ENCODE measurements at regions of chr3 and their contacts with region 1.

Region 1: GRCh38 chr3:186540221-186540834 is 3.9 kb downstream of the CRYGS start:
- DNase-seq: peak; percentile 75
- ATAC-seq: peak; percentile 80
- H3K4me3 ChIP-seq: no peak overlapping the region
- H3K27ac ChIP-seq: no peak overlapping the region
- H3K4me1 ChIP-seq: no peaks in the 10 kb centered on the region
- H3K27me3 ChIP-seq: no peaks in the 10 kb centered on the region
- CTCF ChIP-seq: peak; percentile 78
- POLR2A ChIP-seq: 0 out of 2 replicates have a peak, but pooled peaks have one; percentile 33
- RAD21 ChIP-seq: peak; percentile 85

Region 2: GRCh38 chr3:186108941-186109865 is 431.1 kb before region 1 on chr3 and contains the start of gene ETV5:
- CTCF ChIA-PET with region 1: no interaction called
- POLR2A ChIA-PET with region 1: no interaction called
- dilution Hi-C with region 1: no loop called
- in situ Hi-C with region 1: no loop called
- intact Hi-C with region 1: loop called (anchors 5 kb)
- DNase-seq: peak; percentile 99
- ATAC-seq: peak; percentile 90
- H3K4me3 ChIP-seq: peak within 1 kb of the TSS; percentile 99
- H3K27ac ChIP-seq: peak within 1 kb of the TSS; percentile 89
- H3K4me1 ChIP-seq: peaks cover 8% of the 10 kb centered on the region
- H3K27me3 ChIP-seq: peaks cover 6% of the 10 kb centered on the region
- CTCF ChIP-seq: 0 out of 2 replicates have a peak, but pooled peaks have one; percentile 1
- POLR2A ChIP-seq: peak; percentile 97
- RAD21 ChIP-seq: no peak
- total RNA-seq, gene ETV5: 20.1 and 25.3 TPM in 2 replicates

Region 3: GRCh38 chr3:186277268-186277909 is 262.9 kb before region 1 on chr3:
- CTCF ChIA-PET with region 1: interaction called, 9 read pairs
- POLR2A ChIA-PET with region 1: no interaction called
- dilution Hi-C with region 1: no loop called
- in situ Hi-C with region 1: no loop called
- intact Hi-C with region 1: loop called (anchors 5 kb)
- DNase-seq: peak; percentile 75
- ATAC-seq: peak; percentile 74
- H3K4me3 ChIP-seq: no peak overlapping the region
- H3K27ac ChIP-seq: no peak overlapping the region
- H3K4me1 ChIP-seq: no peaks in the 10 kb centered on the region
- H3K27me3 ChIP-seq: peaks cover 3% of the 10 kb centered on the region; the same call in 1 of the 2 replicates
- CTCF ChIP-seq: peak; percentile 76
- POLR2A ChIP-seq: no peak
- RAD21 ChIP-seq: peak; percentile 88

Region 4: GRCh38 chr3:186617038-186617946 is 77.0 kb after region 1 on chr3:
- CTCF ChIA-PET with region 1: no interaction called
- POLR2A ChIA-PET with region 1: no interaction called
- dilution Hi-C with region 1: no loop called
- in situ Hi-C with region 1: no loop called
- intact Hi-C with region 1: loop called (anchors 2 kb)
- DNase-seq: peak; percentile 96
- ATAC-seq: peak; percentile 99
- H3K4me3 ChIP-seq: peak overlapping the region; percentile 10; the same call in 1 of the 2 replicates
- H3K27ac ChIP-seq: no peak overlapping the region
- H3K4me1 ChIP-seq: no peaks in the 10 kb centered on the region
- H3K27me3 ChIP-seq: peaks cover 14% of the 10 kb centered on the region
- CTCF ChIP-seq: peak; percentile 96
- POLR2A ChIP-seq: no peak
- RAD21 ChIP-seq: peak; percentile 74

Region 5: DNA sequence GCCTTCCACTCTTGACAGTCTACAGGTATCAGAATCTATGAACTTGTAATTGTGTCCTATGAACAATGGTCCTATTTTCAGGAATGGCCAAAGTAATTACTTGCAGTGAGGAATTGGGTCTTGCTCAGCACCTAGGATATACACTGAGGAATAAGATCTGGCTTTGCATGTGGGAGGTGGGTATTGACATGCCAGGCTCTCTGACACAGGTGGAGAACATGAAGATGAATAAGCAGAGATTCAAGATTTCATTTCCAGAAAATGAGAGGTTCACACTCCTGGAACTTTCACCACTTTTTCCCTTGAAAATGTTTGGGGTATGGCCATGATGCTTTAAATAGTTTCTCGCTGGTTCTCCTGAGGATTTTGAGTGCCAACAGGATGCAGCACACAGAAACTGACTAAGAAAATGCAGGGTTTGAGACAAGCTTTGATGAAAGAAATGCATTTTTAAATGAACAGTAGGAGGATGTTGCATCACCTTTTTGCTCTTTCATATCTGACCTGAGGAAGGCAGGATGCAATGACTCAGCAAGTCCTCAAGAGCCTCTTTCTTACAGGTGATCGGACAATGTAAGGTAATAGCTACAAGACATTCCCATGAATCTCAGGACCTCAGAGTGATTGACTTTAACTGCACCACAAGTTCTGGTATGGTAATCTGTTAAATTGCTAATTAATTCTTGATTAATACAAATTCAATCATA is 129.2 kb after region 1 on chr3:
- CTCF ChIA-PET with region 1: no interaction called
- POLR2A ChIA-PET with region 1: no interaction called
- dilution Hi-C with region 1: no loop called
- in situ Hi-C with region 1: no loop called
- intact Hi-C with region 1: no loop called
- DNase-seq: no peak
- ATAC-seq: no peak
- H3K4me3 ChIP-seq: no peak overlapping the region
- H3K27ac ChIP-seq: no peak overlapping the region
- H3K4me1 ChIP-seq: no peaks in the 10 kb centered on the region
- H3K27me3 ChIP-seq: peaks cover 16% of the 10 kb centered on the region
- CTCF ChIP-seq: no peak
- POLR2A ChIP-seq: no peak
- RAD21 ChIP-seq: no peak